ENCODE measurements at regions of chr11 and their contacts with region 1.

Region 1: GRCh38 chr11:75867775-75868374 is 52.9 kb downstream of the UVRAG start:
- DNase-seq: no peak
- H3K4me3 ChIP-seq: no peak overlapping the region
- H3K27ac ChIP-seq: no peak overlapping the region
- H3K4me1 ChIP-seq: no peaks in the 10 kb centered on the region; a peak in 1 of 7 replicates
- H3K27me3 ChIP-seq: no peaks in the 10 kb centered on the region
- CTCF ChIP-seq: peak in 2 of 3 experiments; percentile 50 to 64; a peak in 2 of 4 replicates
- EP300 ChIP-seq: no peak
- POLR2A ChIP-seq: no peak
- RAD21 ChIP-seq: peak; percentile 68 to 69

Region 2: GRCh38 chr11:75582895-75583717 is 284.8 kb before region 1 on chr11:
- CTCF ChIA-PET with region 1: no interaction called
- POLR2A ChIA-PET with region 1: no interaction called
- DNase-seq: peak in 1 of 2 experiments; percentile 88
- H3K4me3 ChIP-seq: peak overlapping the region; percentile 58 to 77 (median 66)
- H3K27ac ChIP-seq: peak overlapping the region; percentile 50; the same call in 1 of the 2 replicates
- H3K4me1 ChIP-seq: peaks cover 2 to 17% (median 14%) of the 10 kb centered on the region in 4 experiments
- H3K27me3 ChIP-seq: no peaks in the 10 kb centered on the region
- CTCF ChIP-seq: peak in 2 of 3 experiments; percentile 25 to 39; a peak in 3 of 4 replicates
- EP300 ChIP-seq: no peak; a peak in 1 of 3 replicates
- POLR2A ChIP-seq: peak; percentile 42 to 70; a peak in 2 of 3 replicates
- RAD21 ChIP-seq: peak; percentile 1 to 16; a peak in 1 of 4 replicates

Region 3: GRCh38 chr11:75717608-75718418 is 150.1 kb before region 1 on chr11 and contains the start of gene MOGAT2:
- CTCF ChIA-PET with region 1: interaction called, 21 read pairs
- POLR2A ChIA-PET with region 1: no interaction called
- DNase-seq: no peak
- H3K4me3 ChIP-seq: no peak within 1 kb of the TSS
- H3K27ac ChIP-seq: no peak within 1 kb of the TSS
- H3K4me1 ChIP-seq: peaks cover 0 to 3% (median 0%) of the 10 kb centered on the region in 4 experiments; a peak in 2 of 7 replicates
- H3K27me3 ChIP-seq: peaks cover 0 to 15% (median 4%) of the 10 kb centered on the region in 4 experiments; a peak in 4 of 7 replicates
- CTCF ChIP-seq: no peak
- EP300 ChIP-seq: no peak
- POLR2A ChIP-seq: no peak
- RAD21 ChIP-seq: no peak
- total RNA-seq, gene MOGAT2: not detected in 2 replicates

Region 4: DNA sequence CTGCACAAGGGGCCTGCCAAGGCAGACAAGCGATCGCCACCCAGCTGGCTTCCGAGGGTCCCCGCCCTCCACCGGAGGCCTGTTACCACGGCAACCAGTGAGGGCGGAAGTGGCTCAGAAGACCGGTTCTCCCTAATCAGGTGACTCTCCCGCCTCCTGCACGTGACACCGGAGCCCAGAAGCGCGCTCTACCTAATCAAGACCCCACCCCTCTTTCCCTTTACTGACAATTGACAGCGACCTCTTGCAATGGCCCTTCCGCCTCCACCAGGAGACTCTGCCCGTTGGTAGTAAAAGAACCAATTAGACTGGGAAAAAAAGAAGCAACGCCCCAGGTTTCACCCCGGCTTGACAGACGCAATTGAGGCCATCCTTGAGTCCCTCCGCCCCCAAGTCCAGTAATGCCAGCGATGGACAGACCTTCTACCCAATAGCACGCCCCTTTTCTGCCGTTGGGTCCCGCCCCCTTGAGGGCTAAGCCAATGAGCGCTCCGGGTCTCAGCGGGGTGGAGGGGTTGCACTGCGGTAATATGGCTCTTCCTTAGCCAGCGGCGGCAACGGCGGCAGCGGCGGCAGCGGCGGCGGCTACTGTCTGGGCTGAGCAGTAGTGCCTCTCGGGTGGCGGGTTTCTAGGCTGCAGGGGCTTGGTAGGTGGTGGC is 53.1 kb before region 1 on chr11 and contains the start of gene UVRAG:
- CTCF ChIA-PET with region 1: interaction called, 34 read pairs
- POLR2A ChIA-PET with region 1: interaction called, 3 read pairs
- DNase-seq: peak; percentile 95 to 99
- H3K4me3 ChIP-seq: peak within 1 kb of the TSS; percentile 82 to 96 (median 85)
- H3K27ac ChIP-seq: no peak within 1 kb of the TSS
- H3K4me1 ChIP-seq: peaks cover 2 to 17% (median 9%) of the 10 kb centered on the region in 4 experiments; a peak in 6 of 7 replicates
- H3K27me3 ChIP-seq: no peaks in the 10 kb centered on the region
- CTCF ChIP-seq: no peak
- EP300 ChIP-seq: no peak; a peak in 1 of 3 replicates
- POLR2A ChIP-seq: peak in 1 of 2 experiments; percentile 27; a peak in 1 of 3 replicates
- RAD21 ChIP-seq: no peak
- total RNA-seq, gene UVRAG: 10.4 and 14.7 TPM in 2 replicates

Region 5: GRCh38 chr11:75831915-75832502 is 35.9 kb before region 1 on chr11:
- CTCF ChIA-PET with region 1: interaction called, 15 read pairs
- POLR2A ChIA-PET with region 1: no interaction called
- DNase-seq: no peak
- H3K4me3 ChIP-seq: no peak overlapping the region
- H3K27ac ChIP-seq: no peak overlapping the region
- H3K4me1 ChIP-seq: no peaks in the 10 kb centered on the region; a peak in 1 of 7 replicates
- H3K27me3 ChIP-seq: no peaks in the 10 kb centered on the region
- CTCF ChIP-seq: no peak
- EP300 ChIP-seq: no peak
- POLR2A ChIP-seq: no peak
- RAD21 ChIP-seq: no peak

Measured in H1 (cell line).